ENCODE measurements at regions of chr5 and their contacts with region 1.

Region 1: GRCh38 chr5:40223884-40224402 is 455.8 kb upstream of the PTGER4 start:
- DNase-seq: no peak

Region 2: GRCh38 chr5:39815711-39816110 is 408.2 kb before region 1 on chr5:
- intact Hi-C with region 1: no loop called
- DNase-seq: no peak

Region 3: GRCh38 chr5:40879163-40879942 is 655.4 kb after region 1 on chr5:
- intact Hi-C with region 1: loop called in 1 of 2 experiments (anchors 5 kb)
- DNase-seq: no peak

Region 4: DNA sequence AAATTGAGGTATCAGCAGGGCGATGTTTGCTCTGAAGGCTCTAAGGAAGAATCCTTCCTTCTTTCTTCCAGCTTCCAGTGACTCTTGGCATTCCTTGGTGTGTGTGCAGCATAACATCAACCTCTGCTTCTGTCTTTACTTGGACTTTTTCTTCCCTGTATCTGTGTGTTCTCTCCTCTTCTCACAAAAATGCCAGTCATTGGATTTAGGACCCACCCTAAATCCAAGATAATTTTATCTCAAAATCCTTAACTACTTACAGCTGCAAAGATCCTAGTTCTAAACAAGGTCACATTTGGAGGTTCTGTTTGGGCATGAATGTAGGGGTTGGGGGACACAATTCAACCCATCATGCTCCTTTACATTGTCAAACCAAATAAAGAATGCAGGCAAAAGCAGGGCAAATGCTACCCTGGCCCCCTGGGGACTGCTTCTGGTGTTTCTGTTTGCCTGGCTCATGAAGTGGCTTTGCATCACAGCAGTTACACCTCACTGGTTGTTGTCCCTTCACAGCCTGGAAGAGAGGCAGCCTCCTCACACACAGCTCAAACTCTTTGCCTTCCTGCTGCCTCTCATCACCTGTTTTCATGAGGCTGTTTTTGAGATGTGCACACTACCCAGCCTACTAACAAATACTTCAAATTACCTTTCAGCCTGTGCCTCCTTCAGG is 1351.3 kb after region 1 on chr5:
- intact Hi-C with region 1: no loop called
- DNase-seq: no peak

Measured in posterior vena cava (tissue), 2 donors.